MCF 10A (cell line): ENCODE measurements at regions of chr19 and their contacts with region 1.

Region 1: DNA sequence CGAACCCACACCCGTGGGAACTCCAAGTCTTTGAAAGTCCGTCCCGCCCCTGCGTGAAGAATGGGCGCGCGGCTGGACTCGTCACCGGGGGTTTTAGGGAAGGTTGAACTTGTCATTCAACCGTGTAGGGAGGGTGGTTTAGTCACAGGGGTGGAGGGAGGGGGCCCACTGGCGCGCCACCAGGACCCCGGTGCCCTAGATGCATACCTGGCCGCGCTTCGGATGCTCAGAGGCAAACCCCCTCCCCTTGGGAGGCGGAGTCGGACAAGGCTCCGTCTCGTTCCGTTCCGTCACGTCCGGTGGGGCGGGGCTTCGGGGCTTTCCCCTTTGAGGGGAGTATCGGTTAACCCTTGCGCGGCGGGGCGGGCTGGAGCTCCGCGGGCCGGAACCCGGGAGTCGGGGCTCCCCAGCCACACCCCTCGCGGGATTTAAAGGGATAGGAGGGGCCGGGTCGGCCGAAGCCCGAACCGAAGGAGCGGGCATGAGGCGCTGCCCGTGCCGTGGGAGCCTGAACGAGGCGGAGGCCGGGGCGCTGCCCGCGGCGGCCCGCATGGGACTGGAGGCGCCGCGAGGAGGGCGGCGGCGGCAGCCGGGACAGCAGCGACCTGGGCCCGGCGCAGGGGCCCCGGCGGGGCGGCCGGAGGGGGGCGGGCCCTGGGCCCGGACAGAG is at the starts of genes COQ8B and ITPKC:
- DNase-seq: peak; percentile 100
- H3K4me3 Mint-ChIP-seq: peak within 1 kb of the TSS; percentile 92
- H3K27ac Mint-ChIP-seq: peak within 1 kb of the TSS; percentile 95
- H3K4me1 Mint-ChIP-seq: peaks cover 39% of the 10 kb centered on the region
- H3K27me3 Mint-ChIP-seq: no peaks in the 10 kb centered on the region
- CTCF ChIP-seq: no peak
- total RNA-seq, gene COQ8B: 41.7 and 46.7 TPM in 2 replicates
- total RNA-seq, gene ITPKC: 27.1 and 33.2 TPM in 2 replicates

Region 2: DNA sequence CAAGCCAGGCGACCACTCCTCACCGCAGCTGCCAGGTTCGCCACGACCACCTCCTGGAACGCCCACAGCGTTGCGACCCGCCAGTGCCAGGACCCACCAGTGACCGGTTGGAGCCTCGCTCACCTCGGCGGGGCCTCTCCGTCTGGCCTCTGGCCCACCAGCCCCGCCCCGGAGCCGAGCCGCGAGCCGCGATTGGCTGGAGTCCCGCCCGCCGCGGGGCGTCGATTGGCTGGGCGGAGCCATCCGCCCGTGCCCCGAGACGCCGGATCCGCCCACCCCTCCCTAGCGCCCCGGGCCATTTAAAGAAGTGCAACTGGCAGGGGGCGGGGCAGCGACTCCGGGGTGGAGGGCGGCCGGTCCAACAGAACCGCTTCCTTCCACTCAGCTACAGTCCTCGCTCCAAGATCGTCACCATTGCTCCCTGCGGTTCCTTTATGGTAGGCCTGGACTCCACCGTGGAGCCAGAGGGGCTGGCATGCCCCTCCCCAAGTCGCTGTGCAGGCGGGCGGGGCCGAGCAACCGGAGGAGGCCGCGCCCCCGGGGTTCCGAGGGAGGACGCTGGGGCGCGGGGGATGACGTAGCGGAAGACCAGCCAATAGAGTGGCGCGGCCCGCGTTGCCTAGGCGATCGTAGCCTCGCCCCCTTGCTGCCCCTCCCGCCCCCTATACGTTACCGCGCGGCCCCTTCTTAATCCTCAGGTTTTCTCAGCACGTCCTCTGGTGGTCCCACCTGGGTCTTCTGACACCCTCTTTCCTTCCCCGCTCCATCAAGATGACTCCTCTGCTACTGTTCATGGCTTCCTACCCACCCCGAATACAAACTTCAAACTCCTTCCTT is 272.4 kb before region 1 on chr19 and contains the start of gene SERTAD3:
- CTCF ChIA-PET with region 1: no interaction called
- POLR2A ChIA-PET with region 1: interaction called, 11 read pairs
- intact Hi-C with region 1: no loop called
- DNase-seq: peak; percentile 96
- H3K4me3 Mint-ChIP-seq: peak within 1 kb of the TSS; percentile 100
- H3K27ac Mint-ChIP-seq: peak within 1 kb of the TSS; percentile 92
- H3K4me1 Mint-ChIP-seq: peaks cover 22% of the 10 kb centered on the region
- H3K27me3 Mint-ChIP-seq: no peaks in the 10 kb centered on the region
- CTCF ChIP-seq: no peak
- total RNA-seq, gene SERTAD3: 23.3 and 29.4 TPM in 2 replicates

Region 3: GRCh38 chr19:40529093-40529954 is 187.5 kb before region 1 on chr19:
- CTCF ChIA-PET with region 1: no interaction called
- POLR2A ChIA-PET with region 1: no interaction called
- intact Hi-C with region 1: no loop called
- DNase-seq: peak; percentile 79
- H3K4me3 Mint-ChIP-seq: peak overlapping the region; percentile 64
- H3K27ac Mint-ChIP-seq: no peak overlapping the region
- H3K4me1 Mint-ChIP-seq: peaks cover 14% of the 10 kb centered on the region
- H3K27me3 Mint-ChIP-seq: no peaks in the 10 kb centered on the region
- CTCF ChIP-seq: peak; percentile 95

Region 4: DNA sequence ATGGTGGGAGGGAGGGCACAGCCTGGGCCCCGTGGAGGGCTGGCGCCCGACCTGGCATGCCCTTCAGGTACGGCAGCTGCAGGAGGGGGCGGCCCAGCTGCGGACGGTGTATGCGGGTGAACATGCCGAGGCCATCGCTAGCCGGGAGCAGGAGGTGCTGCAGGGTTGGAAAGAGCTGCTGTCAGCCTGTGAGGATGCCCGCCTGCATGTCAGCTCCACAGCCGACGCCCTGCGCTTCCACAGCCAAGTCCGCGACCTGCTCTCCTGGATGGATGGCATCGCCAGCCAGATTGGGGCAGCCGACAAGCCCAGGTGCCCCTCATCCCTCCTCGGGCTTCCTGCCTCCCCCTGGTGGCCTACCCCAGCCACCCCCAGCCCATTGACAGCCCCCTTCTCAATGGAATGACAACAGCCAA is 156.7 kb before region 1 on chr19:
- CTCF ChIA-PET with region 1: no interaction called
- POLR2A ChIA-PET with region 1: no interaction called
- intact Hi-C with region 1: no loop called
- DNase-seq: no peak
- H3K4me3 Mint-ChIP-seq: no peak overlapping the region
- H3K27ac Mint-ChIP-seq: no peak overlapping the region
- H3K4me1 Mint-ChIP-seq: no peaks in the 10 kb centered on the region
- H3K27me3 Mint-ChIP-seq: peaks cover 21% of the 10 kb centered on the region
- CTCF ChIP-seq: no peak

Region 5: DNA sequence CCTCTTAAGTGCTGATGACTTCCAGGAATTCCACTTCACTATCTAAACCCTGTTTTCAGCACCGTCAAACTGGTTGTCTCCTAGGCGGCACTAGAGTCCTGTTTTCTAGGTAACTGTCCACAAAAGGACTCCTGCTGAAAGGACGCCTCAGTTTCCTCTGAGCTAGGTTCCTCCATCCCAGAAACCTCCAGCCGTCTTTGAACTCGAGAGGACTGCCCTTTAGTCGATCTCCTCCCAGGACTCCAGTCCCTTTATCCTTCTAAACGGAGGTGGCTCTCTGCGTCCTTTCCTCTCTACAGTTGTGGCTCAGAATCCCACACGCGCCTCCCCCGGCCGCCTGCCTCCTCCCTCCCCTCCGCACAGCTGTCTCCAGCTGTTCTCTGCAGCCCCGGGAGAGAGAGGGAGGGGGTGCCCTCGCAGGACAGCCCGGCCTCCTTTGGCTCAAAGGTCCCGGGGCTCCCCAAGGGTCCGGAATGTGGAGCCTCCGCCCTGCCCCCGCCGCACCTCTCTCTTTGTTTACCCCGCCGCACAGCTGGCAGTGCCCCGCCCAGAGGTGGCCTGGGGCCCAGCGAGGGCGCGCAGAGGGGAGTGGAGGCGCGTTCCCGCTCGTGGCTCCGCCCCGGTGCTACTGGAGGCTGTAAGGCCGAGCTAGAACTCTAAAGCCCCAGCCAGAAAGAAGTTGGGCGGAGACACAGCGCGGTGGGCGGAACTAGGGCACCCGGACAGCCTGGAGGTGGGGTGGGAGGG is 113.2 kb before region 1 on chr19:
- CTCF ChIA-PET with region 1: no interaction called
- POLR2A ChIA-PET with region 1: interaction called, 44 read pairs
- intact Hi-C with region 1: no loop called
- DNase-seq: peak; percentile 99
- H3K4me3 Mint-ChIP-seq: peak overlapping the region; percentile 79
- H3K27ac Mint-ChIP-seq: peak overlapping the region; percentile 69
- H3K4me1 Mint-ChIP-seq: peaks cover 47% of the 10 kb centered on the region
- H3K27me3 Mint-ChIP-seq: no peaks in the 10 kb centered on the region
- CTCF ChIP-seq: no peak

Region 6: DNA sequence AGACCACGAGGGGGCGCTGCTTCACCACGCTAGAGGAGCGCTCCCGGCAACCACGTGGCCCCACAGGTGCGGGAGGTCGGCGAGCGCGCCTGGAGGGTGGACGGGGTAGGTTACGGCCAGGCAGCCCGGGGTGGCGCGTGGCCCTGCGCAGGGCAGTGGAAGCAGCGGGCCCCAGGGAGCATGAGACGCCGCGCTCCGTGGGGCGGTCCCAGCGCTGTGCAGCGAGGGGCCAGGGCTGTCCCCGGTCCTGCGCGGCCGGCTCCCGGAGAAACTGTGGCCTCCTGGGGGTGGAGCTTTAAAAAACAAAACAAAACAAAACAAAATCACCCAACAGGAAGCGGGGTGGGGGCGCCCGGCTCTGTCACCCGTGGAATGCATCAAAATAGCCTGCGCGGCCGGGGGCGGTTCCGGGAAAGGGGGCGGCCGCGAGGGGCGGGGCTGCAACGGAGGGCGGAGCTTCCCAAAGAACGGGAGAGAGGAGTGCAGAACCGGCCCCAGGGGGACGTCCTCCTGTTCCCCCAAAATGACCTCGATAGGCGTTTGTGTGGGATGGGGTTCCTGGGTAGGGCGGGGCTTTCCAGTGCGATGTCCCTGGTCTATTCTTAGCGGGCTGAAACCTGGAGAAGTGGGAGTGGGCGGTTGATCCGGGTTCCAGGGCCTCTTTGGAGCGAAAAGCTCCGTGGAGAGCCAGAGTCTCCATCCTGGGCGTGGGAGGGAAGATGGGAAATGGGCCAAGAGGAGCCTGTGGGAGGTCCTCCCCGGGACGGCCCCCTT is 53.7 kb before region 1 on chr19:
- CTCF ChIA-PET with region 1: interaction called, 6 read pairs
- POLR2A ChIA-PET with region 1: interaction called, 17 read pairs
- intact Hi-C with region 1: loop called (anchors 1 kb)
- DNase-seq: peak; percentile 83
- H3K4me3 Mint-ChIP-seq: peak overlapping the region; percentile 77
- H3K27ac Mint-ChIP-seq: peak overlapping the region; percentile 57
- H3K4me1 Mint-ChIP-seq: peaks cover 14% of the 10 kb centered on the region
- H3K27me3 Mint-ChIP-seq: no peaks in the 10 kb centered on the region
- CTCF ChIP-seq: peak; percentile 96

Region 7: DNA sequence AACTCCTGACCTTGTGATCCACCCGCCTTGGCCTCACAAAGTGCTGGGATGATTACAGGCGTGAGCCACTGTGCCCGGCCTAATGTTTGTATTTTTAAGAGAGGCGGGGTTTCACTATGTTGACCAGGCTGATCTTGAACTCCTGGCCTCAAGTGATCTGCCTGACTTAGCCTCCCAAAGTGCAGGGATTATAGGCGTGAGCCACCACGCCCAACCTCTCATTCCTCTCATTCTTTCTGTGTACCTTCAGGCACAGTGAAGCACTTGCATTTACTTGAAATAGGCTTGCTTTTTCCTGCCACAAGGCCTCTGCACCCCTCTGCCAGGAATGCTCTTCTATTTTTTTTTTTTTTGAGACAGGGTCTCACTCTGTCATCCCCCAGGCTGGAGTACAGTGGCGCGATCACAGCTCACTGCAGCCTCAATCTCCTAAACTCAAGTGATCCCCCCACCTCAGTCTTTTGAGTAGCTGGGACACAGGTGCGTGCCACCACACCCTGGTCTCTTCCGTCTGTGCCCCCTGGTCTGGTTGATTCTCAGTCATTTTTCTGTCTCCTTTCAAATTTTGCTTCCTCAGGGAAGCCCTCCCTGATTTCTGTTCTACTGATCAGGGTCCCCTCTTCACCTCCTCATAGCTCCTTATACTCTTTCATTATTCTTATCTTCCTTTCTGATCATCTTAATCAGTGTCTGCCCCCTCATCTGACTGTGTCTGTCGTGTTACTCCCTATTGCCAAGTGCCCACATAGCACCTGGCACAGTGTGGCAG is 18.4 kb after region 1 on chr19:
- CTCF ChIA-PET with region 1: interaction called, 3 read pairs
- POLR2A ChIA-PET with region 1: interaction called, 27 read pairs
- intact Hi-C with region 1: no loop called
- DNase-seq: no peak
- H3K4me3 Mint-ChIP-seq: peak overlapping the region; percentile 10
- H3K27ac Mint-ChIP-seq: peak overlapping the region; percentile 82
- H3K4me1 Mint-ChIP-seq: peaks cover 7% of the 10 kb centered on the region
- H3K27me3 Mint-ChIP-seq: no peaks in the 10 kb centered on the region
- CTCF ChIP-seq: no peak

Region 8: GRCh38 chr19:40750059-40750873 is 33.5 kb after region 1 on chr19 and contains the start of gene ACTMAP:
- CTCF ChIA-PET with region 1: interaction called, 4 read pairs
- POLR2A ChIA-PET with region 1: interaction called, 79 read pairs
- intact Hi-C with region 1: loop called (anchors 2 kb)
- DNase-seq: peak; percentile 100
- H3K4me3 Mint-ChIP-seq: peak within 1 kb of the TSS; percentile 92
- H3K27ac Mint-ChIP-seq: peak within 1 kb of the TSS; percentile 91
- H3K4me1 Mint-ChIP-seq: peaks cover 31% of the 10 kb centered on the region
- H3K27me3 Mint-ChIP-seq: no peaks in the 10 kb centered on the region
- CTCF ChIP-seq: no peak
- total RNA-seq, gene ACTMAP: 19.3 and 21.2 TPM in 2 replicates

Region 9: DNA sequence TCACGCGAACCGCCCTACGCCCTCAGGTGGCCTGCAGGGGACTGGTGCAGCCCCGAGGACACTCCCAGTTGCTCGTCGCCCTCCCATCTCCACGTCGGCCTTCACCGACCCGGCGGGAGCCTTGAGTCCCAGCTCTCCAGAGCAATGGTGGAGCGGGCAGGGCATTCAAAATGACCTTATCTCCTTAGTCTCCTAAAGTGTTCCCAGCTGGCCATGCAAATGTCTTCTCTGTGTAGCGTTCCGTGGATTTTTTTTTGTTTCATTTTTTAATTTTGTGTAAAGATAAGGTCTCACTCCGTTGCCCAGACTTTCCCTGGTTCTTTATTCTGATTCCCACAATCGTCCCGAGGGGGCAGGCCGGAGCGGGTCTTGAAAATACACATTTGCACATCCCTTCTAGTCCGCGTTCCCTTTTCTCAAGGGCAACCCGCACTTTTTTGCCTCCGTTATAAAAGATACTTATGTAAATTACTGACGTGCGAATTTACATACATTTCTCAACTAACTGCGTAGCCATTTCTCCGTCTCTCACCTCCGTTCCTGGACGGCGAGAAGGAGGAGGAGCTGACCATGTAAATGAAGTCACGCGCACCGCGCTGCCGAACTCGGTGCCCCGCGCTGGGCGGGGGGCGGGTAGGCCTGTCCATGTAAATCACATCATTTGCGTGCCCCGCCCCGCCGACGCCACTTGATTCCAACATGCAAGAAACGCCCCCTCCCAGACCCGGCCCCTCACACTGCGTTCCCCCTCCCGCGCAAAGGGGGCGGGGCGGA is 81.6 kb after region 1 on chr19:
- CTCF ChIA-PET with region 1: interaction called, 4 read pairs
- POLR2A ChIA-PET with region 1: interaction called, 21 read pairs
- intact Hi-C with region 1: loop called (anchors 1 kb)
- DNase-seq: peak; percentile 100
- H3K4me3 Mint-ChIP-seq: peak overlapping the region; percentile 86
- H3K27ac Mint-ChIP-seq: peak overlapping the region; percentile 93
- H3K4me1 Mint-ChIP-seq: peaks cover 29% of the 10 kb centered on the region
- H3K27me3 Mint-ChIP-seq: no peaks in the 10 kb centered on the region
- CTCF ChIP-seq: no peak